ENCODE measurements at regions of chr4 and their contacts with region 1.

Region 1: DNA sequence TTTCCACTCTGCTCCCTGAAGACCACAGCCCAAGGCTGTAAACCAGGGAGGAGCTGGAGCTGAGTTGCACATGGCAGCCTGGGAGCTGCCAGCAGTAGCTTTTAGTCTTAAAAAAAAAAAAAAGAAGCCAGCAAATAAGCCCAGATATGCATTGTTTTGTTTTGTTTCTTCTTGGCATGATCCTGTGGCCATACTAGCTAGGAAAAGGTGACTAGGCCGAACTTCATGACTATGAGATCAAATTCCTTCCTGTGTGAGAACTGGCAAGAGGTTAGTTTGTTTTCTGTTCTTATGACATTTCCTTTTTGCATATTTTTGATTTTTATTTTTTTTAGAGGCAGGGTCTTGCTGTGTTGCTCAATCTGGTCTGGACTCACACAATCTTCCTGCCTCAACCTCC is 323.3 kb downstream of the DCTD start:
- DNase-seq: no peak
- ATAC-seq: no peak
- H3K4me3 Mint-ChIP-seq: no peak overlapping the region
- H3K27ac Mint-ChIP-seq: no peak overlapping the region
- H3K4me1 Mint-ChIP-seq: no peaks in the 10 kb centered on the region
- H3K27me3 Mint-ChIP-seq: peaks cover 11% of the 10 kb centered on the region

Region 2: DNA sequence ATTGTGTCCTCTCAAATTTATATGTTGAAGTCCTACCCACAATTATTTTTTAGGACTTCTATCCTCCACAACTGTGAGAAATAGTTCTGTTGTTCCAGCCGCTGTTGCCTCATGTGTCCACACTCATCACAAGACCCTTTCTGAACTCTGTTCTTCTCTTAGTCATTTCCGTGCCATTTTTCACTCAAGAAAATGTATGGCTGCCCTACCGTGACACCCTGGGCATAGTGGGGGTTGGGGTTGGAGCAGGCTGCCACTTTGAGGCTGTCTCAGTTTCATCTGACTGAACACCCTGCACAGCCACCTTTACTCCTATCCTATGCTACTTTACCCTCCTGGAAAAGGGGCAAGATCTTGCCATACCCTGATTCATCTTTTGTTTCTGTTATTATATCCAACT is 31.5 kb before region 1 on chr4:
- CTCF ChIA-PET with region 1: no interaction called
- POLR2A ChIA-PET with region 1: no interaction called
- intact Hi-C with region 1: loop called in 1 of 2 experiments (anchors 1 kb)
- DNase-seq: no peak
- ATAC-seq: no peak
- H3K4me3 Mint-ChIP-seq: no peak overlapping the region
- H3K27ac Mint-ChIP-seq: no peak overlapping the region
- H3K4me1 Mint-ChIP-seq: no peaks in the 10 kb centered on the region
- H3K27me3 Mint-ChIP-seq: peaks cover 12% of the 10 kb centered on the region

Measured in activated CD4-positive, alpha-beta T cell treated with anti-CD3 and anti-CD28 coated beads for 36 hours (primary cell).